PC-9 (cell line): ENCODE measurements at regions of chr19 and their contacts with region 1.

Region 1: GRCh38 chr19:15251749-15252397 is 19.6 kb upstream of the EPHX3 start:
- DNase-seq: peak; percentile 72 to 78
- H3K4me3 ChIP-seq: no peak overlapping the region
- H3K27ac ChIP-seq: peak overlapping the region; percentile 62
- H3K4me1 ChIP-seq: peaks cover 39% of the 10 kb centered on the region
- H3K27me3 ChIP-seq: no peaks in the 10 kb centered on the region
- CTCF ChIP-seq: no peak; the same call in none of the 2 replicates

Region 2: DNA sequence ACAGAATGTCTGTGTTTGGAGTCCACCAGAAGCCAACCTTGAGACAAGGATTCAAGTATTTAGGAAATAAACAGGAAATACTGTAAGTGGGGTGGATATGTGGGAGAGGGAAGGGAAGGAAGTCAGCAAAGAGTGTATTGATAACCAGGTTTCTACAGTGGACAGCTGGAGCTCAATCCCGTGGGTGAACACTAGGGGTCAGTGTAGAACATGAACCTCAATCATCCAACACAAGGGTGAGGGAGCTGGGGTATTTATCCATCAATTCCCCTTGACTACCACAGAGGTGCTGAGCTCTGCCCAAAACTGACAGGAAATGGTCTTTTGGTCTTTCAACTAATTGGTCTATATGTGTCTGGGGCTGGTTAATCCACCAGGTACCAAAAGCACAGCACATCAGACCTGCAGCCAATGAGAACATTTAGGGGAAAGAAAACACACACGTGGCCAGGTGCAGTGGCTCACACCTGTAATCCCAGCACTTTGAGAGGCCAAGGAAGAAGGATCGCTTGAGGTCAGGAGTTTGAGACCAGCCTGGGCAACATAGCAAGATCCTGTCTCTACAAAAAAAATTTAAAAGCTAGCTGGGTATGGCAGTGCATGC is 150.3 kb before region 1 on chr19:
- CTCF ChIA-PET with region 1: no interaction called
- POLR2A ChIA-PET with region 1: no interaction called
- intact Hi-C with region 1: loop called (anchors 10 kb)
- DNase-seq: peak in 1 of 2 experiments; percentile 34
- H3K4me3 ChIP-seq: no peak overlapping the region
- H3K27ac ChIP-seq: no peak overlapping the region
- H3K4me1 ChIP-seq: peaks cover 8% of the 10 kb centered on the region; the same call in 1 of the 2 replicates
- H3K27me3 ChIP-seq: no peaks in the 10 kb centered on the region
- CTCF ChIP-seq: peak; percentile 85

Region 3: DNA sequence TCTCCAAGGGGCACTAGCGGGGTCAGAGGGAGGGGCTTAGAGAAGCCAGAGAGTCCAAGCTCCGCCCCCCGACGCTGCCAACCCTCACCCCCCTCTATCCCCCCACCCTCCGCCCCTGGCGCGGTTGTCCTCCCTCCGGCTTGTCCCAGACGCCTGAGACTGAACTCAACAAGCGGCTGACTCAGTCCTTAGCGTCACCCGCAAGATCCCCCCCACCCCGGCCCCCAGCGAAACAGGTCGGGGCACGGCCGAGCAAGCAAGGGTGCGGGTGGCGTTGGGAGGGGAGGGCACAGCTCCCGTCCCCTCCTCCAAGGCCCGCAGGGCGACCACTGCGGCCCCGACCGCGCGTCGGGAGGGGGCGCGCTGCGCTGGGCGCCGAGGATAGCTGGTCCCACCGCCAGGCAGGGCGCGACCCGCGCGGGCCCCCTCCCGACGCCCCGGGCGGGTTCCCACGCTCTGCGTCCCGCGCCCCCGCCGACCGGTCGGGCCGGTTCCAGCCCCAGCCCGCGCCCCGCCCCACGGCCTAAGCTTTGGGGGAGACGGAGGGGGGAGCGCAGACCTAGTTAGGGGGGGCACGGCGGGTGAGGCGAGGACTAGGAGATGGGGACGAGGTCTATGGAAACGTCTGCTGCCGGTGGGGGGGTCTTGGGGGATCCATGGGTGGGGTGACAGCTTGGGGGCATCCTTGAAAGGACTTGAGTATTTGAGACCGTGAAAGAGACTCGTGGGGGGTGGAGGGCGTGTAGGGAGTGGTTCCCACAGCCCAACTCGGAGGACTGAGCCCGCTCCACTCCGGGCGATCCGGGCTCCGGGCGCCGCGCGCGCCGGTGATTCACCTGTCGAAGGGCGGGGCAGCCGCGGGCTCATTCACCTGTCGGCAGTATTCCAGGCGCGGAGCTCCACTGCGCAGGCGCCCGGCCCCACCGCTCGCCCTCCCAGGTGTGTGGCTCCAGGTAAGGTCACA is 56.2 kb before region 1 on chr19:
- CTCF ChIA-PET with region 1: interaction called, 3 read pairs
- POLR2A ChIA-PET with region 1: interaction called, 9 read pairs
- intact Hi-C with region 1: loop called (anchors 5 kb)
- DNase-seq: peak; percentile 92 to 98
- H3K4me3 ChIP-seq: peak overlapping the region; percentile 57
- H3K27ac ChIP-seq: peak overlapping the region; percentile 82
- H3K4me1 ChIP-seq: peaks cover 43% of the 10 kb centered on the region
- H3K27me3 ChIP-seq: no peaks in the 10 kb centered on the region
- CTCF ChIP-seq: peak; percentile 35; the same call in 1 of the 2 replicates

Region 4: DNA sequence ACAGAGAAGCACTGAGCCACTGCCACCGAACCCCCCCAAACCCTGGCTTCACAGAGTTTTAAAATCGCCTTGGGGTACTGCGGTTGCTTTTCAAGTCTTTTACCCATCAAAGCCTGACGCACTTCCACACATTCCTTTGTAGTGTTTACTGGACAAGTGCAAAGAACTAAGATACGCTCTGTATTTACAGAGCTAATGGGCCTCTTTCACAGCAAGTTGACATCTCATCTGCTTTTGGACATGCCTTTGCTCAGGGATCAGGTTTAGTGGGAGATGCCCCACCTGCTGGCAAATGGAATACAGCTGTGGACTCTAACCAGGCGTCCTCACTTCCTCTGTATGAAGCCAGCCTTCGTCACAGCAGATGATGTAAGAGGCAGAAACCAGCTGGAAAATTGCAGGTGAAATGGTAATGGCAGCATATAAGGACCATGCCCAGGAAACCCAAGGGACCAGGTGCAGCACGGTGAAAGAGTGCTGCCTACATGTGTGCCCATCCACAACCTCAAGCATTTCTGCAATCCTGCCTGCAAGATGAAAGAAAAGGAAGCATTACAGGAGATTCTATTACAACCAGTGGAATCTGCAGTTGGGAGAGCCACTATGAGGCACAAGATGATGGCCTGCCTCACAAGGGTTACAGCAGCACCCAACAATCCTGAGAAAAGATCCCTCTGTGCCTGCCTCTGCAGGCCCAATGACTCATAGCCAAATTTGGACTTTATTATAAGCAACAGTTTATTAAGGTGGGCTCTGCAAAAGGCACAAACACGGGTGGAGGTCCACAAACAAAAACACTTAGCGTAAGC is 45.7 kb after region 1 on chr19:
- CTCF ChIA-PET with region 1: no interaction called
- POLR2A ChIA-PET with region 1: interaction called, 26 read pairs
- intact Hi-C with region 1: no loop called
- DNase-seq: no peak
- H3K4me3 ChIP-seq: no peak overlapping the region
- H3K27ac ChIP-seq: peak overlapping the region; percentile 58
- H3K4me1 ChIP-seq: peaks cover 41% of the 10 kb centered on the region
- H3K27me3 ChIP-seq: no peaks in the 10 kb centered on the region
- CTCF ChIP-seq: no peak

Region 5: GRCh38 chr19:15393963-15394362 is 142.1 kb after region 1 on chr19:
- CTCF ChIA-PET with region 1: no interaction called
- POLR2A ChIA-PET with region 1: no interaction called
- intact Hi-C with region 1: no loop called
- DNase-seq: no peak
- H3K4me3 ChIP-seq: no peak overlapping the region
- H3K27ac ChIP-seq: no peak overlapping the region
- H3K4me1 ChIP-seq: no peaks in the 10 kb centered on the region
- H3K27me3 ChIP-seq: no peaks in the 10 kb centered on the region
- CTCF ChIP-seq: no peak